ENCODE measurements at regions of chr4 and their contacts with region 1.

Region 1: GRCh38 chr4:151604238-151604637 is 156.6 kb downstream of the GATB start:
- DNase-seq: no peak
- ATAC-seq: peak; percentile 70
- H3K4me3 ChIP-seq: no peak overlapping the region
- H3K27ac ChIP-seq: no peak overlapping the region
- H3K4me1 ChIP-seq: peaks cover 0 to 3% of the 10 kb centered on the region in 2 experiments; a peak in 1 of 4 replicates
- H3K27me3 ChIP-seq: no peaks in the 10 kb centered on the region
- CTCF ChIP-seq: peak; percentile 40 to 62 (median 45); a peak in 4 of 6 replicates
- POLR2A ChIP-seq: no peak
- RAD21 ChIP-seq: peak; percentile 57; the same call in 1 of the 2 replicates

Region 2: GRCh38 chr4:151276787-151277562 is 327.3 kb before region 1 on chr4 and contains the start of gene PRSS48:
- CTCF ChIA-PET with region 1: interaction called, 4 read pairs
- POLR2A ChIA-PET with region 1: no interaction called
- RAD21 ChIA-PET with region 1: no interaction called
- intact Hi-C with region 1: loop called (anchors 2 kb)
- DNase-seq: peak; percentile 34
- ATAC-seq: peak; percentile 97
- H3K4me3 ChIP-seq: no peak within 1 kb of the TSS
- H3K27ac ChIP-seq: no peak within 1 kb of the TSS
- H3K4me1 ChIP-seq: peaks cover 0 to 3% of the 10 kb centered on the region in 2 experiments; a peak in 1 of 4 replicates
- H3K27me3 ChIP-seq: no peaks in the 10 kb centered on the region
- CTCF ChIP-seq: peak; percentile 85 to 99 (median 93)
- POLR2A ChIP-seq: no peak
- RAD21 ChIP-seq: peak; percentile 94
- total RNA-seq, gene PRSS48: not detected

Region 3: GRCh38 chr4:151340751-151341385 is 263.4 kb before region 1 on chr4:
- CTCF ChIA-PET with region 1: no interaction called
- POLR2A ChIA-PET with region 1: no interaction called
- RAD21 ChIA-PET with region 1: no interaction called
- intact Hi-C with region 1: no loop called
- DNase-seq: no peak
- ATAC-seq: no peak
- H3K4me3 ChIP-seq: no peak overlapping the region
- H3K27ac ChIP-seq: no peak overlapping the region
- H3K4me1 ChIP-seq: no peaks in the 10 kb centered on the region
- H3K27me3 ChIP-seq: no peaks in the 10 kb centered on the region
- CTCF ChIP-seq: no peak
- POLR2A ChIP-seq: no peak
- RAD21 ChIP-seq: no peak

Region 4: DNA sequence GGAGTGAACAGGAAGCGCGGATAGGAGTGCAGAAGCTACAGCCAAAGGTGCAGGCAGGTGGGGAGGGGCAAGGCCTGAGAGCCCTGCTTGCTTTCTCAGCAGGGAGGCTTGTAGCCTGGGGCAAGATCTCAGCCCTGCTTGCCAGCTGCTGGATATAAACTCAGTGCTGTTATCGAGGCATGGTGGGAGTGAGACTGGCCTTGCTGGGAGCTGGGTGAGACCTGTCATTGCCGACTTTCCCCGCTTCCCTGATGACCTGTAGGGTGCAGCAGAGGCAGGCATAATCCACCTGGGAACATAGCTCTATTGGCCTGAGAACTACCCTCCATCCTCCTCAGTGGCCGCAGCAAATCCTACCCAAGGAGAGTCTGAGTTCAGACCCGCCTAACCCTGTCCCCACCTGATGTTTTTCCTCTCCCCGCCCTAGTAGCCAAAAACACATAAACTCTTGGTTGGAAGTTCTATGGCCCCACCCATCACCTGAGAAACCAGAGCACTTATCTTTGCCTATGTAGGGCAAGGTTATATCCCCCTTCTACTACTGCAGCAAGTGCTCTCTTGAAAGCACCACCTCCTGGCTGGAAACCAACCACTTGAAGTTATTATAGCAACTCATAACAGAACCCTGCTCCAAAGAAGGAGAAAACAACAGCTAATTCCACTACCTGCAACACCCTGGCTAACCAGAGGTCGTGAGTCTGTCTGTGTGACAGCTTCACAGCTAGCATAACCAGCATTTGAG is 114.6 kb before region 1 on chr4:
- CTCF ChIA-PET with region 1: no interaction called
- POLR2A ChIA-PET with region 1: no interaction called
- RAD21 ChIA-PET with region 1: interaction called in 1 of 2 experiments, 3 read pairs
- intact Hi-C with region 1: loop called (anchors 1 kb)
- DNase-seq: no peak
- ATAC-seq: peak; percentile 74
- H3K4me3 ChIP-seq: no peak overlapping the region
- H3K27ac ChIP-seq: no peak overlapping the region
- H3K4me1 ChIP-seq: peaks cover 11 to 17% of the 10 kb centered on the region in 2 experiments
- H3K27me3 ChIP-seq: no peaks in the 10 kb centered on the region
- CTCF ChIP-seq: peak in 1 of 3 experiments; percentile 20; a peak in 2 of 6 replicates
- POLR2A ChIP-seq: no peak
- RAD21 ChIP-seq: peak; percentile 19; the same call in 1 of the 2 replicates

Region 5: DNA sequence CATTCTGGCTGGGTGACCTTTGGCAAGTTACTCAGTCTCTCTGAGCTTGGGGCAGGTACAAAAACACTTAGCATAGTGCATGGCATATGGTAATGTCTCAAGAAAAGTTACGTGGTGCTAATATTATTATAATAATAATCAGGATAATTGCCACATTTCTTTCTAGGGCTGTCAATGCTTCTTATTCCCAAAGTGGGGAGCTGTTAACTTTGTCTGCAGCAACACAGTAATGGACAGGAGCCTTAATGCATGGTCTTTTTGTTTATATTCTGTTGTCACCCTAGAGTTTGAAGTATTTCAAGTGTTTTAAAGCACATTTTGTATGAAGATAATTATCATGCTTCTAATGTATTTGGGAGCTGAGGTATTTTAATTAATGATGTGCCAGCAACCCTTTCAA is 73.5 kb before region 1 on chr4:
- CTCF ChIA-PET with region 1: interaction called, 3 read pairs
- POLR2A ChIA-PET with region 1: no interaction called
- RAD21 ChIA-PET with region 1: interaction called in 1 of 2 experiments, 6 read pairs
- intact Hi-C with region 1: loop called (anchors 5 kb)
- DNase-seq: no peak
- ATAC-seq: peak; percentile 66
- H3K4me3 ChIP-seq: no peak overlapping the region
- H3K27ac ChIP-seq: no peak overlapping the region
- H3K4me1 ChIP-seq: no peaks in the 10 kb centered on the region
- H3K27me3 ChIP-seq: no peaks in the 10 kb centered on the region
- CTCF ChIP-seq: peak; percentile 30 to 53 (median 40); a peak in 4 of 6 replicates
- POLR2A ChIP-seq: no peak
- RAD21 ChIP-seq: peak; percentile 57

Region 6: DNA sequence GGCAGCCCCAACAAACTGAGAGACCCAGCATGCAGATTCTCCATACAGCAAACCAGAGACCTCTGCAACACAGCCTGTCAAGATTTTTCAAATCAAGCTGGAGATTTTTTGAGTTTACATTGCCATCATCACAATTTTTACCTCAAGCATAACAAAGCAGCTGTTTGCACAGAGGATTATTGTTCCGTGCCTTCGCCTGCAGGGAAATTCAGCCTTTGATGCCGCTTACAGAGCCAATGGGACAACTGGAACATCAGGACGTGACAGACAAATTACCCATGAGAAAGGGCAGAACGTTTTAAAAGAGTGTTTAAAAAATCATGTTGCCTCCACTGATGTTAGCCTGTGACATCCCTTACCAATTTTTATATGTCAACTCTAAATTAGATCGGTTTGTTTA is 567.9 kb after region 1 on chr4:
- CTCF ChIA-PET with region 1: no interaction called
- POLR2A ChIA-PET with region 1: no interaction called
- RAD21 ChIA-PET with region 1: no interaction called
- intact Hi-C with region 1: no loop called
- DNase-seq: no peak
- ATAC-seq: no peak
- H3K4me3 ChIP-seq: no peak overlapping the region
- H3K27ac ChIP-seq: no peak overlapping the region
- H3K4me1 ChIP-seq: peaks cover 0 to 9% of the 10 kb centered on the region in 2 experiments; a peak in 2 of 4 replicates
- H3K27me3 ChIP-seq: no peaks in the 10 kb centered on the region
- CTCF ChIP-seq: no peak
- POLR2A ChIP-seq: no peak
- RAD21 ChIP-seq: no peak

Measured in HCT116 (cell line).